Gastrocnemius medialis (tissue), 4 donors: ENCODE measurements at regions of chr5 and their contacts with region 1.

Region 1: GRCh38 chr5:79488775-79489174 is 25.2 kb downstream of the HOMER1 start:
- DNase-seq: no peak
- ATAC-seq: no peak
- H3K4me3 ChIP-seq: no peak overlapping the region
- H3K27ac ChIP-seq: peak overlapping the region; percentile 62 to 83 (median 74)
- H3K4me1 ChIP-seq: peaks cover 42% of the 10 kb centered on the region in 2 donors
- H3K27me3 ChIP-seq: no peaks in the 10 kb centered on the region
- CTCF ChIP-seq: no peak
- POLR2A ChIP-seq: no peak

Region 2: DNA sequence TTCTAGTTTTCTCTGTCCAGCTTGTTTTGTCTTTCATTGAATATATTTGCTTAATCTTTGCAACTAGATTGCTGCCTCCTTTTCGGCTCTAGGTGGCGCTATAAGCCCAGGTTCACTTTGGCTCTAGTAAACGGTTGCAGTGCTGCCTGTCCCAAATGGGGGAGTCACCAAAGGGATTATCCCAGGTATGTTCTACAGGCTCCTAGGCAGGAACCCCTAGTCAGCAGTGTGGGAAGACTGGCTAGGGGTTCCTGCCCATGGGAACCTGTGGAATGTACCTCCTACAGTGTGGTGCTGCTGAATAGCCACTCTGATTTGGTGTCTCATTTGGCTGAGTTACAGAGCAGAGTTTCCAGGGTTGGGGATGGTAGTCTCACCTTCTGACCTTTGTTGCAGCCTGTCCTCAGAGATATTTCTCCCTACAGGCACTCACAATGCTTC is 588.8 kb before region 1 on chr5:
- in situ Hi-C with region 1: no loop called
- intact Hi-C with region 1: loop called (anchors 10 kb)
- DNase-seq: no peak
- ATAC-seq: peak in 1 of 2 donors; percentile 18
- H3K4me3 ChIP-seq: no peak overlapping the region
- H3K27ac ChIP-seq: no peak overlapping the region
- H3K4me1 ChIP-seq: no peaks in the 10 kb centered on the region
- H3K27me3 ChIP-seq: no peaks in the 10 kb centered on the region
- CTCF ChIP-seq: peak; percentile 46 to 67 (median 63)
- POLR2A ChIP-seq: no peak